Prostate gland (tissue), 2 donors: ENCODE measurements at regions of chr16 and their contacts with region 1.

Region 1: DNA sequence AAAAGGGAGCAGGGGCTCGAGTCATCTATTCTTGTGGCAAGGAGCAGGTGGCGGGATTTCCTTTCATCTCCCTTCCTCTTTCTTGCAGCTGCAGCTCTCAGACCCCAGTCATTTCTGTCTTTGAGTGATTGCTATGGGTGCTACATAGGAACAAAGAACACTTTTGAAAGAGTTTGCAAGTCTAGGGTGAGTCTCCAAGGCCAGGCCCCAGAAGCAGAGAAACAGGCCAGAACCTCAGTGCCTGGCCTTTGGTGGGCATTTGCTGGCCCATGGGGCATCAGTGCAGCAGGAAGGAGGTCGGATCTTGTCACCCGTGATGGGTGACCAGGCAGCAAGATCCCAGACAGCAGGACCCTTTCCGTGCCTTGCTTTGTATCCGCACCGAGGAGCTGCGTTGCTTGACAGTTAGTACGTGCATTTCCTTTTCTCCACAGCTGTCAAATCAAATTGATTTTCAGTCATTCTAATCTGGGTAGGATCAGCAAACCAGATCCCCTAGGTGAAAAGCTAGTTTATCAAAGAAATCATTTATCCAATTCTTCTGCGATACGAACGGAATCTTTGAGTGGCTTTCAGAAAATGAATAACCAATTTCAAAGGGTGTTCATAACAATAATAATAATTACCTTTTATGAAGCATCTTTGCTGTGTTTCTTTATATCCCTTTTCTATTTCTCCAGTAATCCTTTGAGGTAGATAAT is 244.6 kb upstream of the MAF start:
- DNase-seq: no peak
- H3K4me3 ChIP-seq: no peak overlapping the region
- H3K27ac ChIP-seq: no peak overlapping the region
- H3K4me1 ChIP-seq: peaks cover 5% of the 10 kb centered on the region
- H3K27me3 ChIP-seq: no peaks in the 10 kb centered on the region
- CTCF ChIP-seq: no peak
- POLR2A ChIP-seq: no peak

Region 2: DNA sequence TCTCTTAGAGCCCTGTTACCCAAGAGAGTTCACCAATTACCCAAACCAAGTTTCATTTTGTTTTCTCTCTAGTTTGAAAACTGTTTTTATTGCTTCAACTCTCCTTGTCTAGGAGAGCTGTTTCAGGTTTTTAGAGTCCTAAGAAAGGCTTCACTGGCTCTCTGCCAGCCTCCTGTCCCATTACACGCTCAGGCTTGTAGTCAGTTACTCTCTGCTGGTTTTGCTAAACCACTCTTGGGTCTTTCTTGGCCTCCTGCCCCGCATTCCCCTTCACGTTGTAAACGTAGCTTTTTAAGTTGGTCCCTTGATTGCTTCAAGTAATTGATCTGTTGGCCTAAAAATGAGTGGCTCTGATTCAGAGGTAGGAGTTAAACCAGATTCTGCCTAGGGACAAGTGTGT is 773.8 kb before region 1 on chr16:
- intact Hi-C with region 1: loop called (anchors 10 kb)
- DNase-seq: peak; percentile 82
- H3K4me3 ChIP-seq: no peak overlapping the region
- H3K27ac ChIP-seq: peak overlapping the region; percentile 7 to 20
- H3K4me1 ChIP-seq: no peaks in the 10 kb centered on the region
- H3K27me3 ChIP-seq: no peaks in the 10 kb centered on the region
- CTCF ChIP-seq: no peak
- POLR2A ChIP-seq: no peak

Region 3: GRCh38 chr16:79482011-79482410 is 363.2 kb before region 1 on chr16:
- intact Hi-C with region 1: no loop called
- DNase-seq: no peak
- H3K4me3 ChIP-seq: no peak overlapping the region
- H3K27ac ChIP-seq: no peak overlapping the region
- H3K4me1 ChIP-seq: no peaks in the 10 kb centered on the region
- H3K27me3 ChIP-seq: no peaks in the 10 kb centered on the region
- CTCF ChIP-seq: no peak
- POLR2A ChIP-seq: no peak

Region 4: DNA sequence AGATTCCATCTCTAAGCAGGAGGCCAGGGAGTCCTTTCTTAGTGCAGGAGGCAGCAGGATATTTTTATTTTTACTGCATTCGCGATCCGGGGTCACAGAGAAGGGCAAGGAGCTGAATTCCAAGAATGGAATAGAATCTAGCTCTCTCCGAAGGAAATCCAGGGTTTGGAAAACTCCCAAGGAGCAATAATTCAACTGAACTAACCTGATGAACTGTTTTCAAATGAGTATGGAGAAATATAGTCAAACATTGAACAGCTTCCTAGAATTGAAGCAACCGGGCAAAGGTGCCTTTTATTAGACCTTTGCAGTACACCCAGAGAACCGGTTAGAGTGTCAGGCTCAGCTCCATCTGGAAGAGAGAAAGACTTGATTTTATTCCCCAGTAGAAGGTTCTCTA is 123.9 kb before region 1 on chr16:
- intact Hi-C with region 1: loop called (anchors 10 kb)
- DNase-seq: peak; percentile 30
- H3K4me3 ChIP-seq: no peak overlapping the region
- H3K27ac ChIP-seq: peak overlapping the region; percentile 7 to 43
- H3K4me1 ChIP-seq: peaks cover 13% of the 10 kb centered on the region
- H3K27me3 ChIP-seq: no peaks in the 10 kb centered on the region
- CTCF ChIP-seq: no peak
- POLR2A ChIP-seq: no peak